MCF 10A (cell line): ENCODE measurements at regions of chr5 and their contacts with region 1.

Region 1: GRCh38 chr5:90461292-90461691 is 13.3 kb downstream of the MBLAC2 start:
- DNase-seq: no peak
- H3K4me3 Mint-ChIP-seq: no peak overlapping the region
- H3K27ac Mint-ChIP-seq: peak overlapping the region; percentile 81
- H3K4me1 Mint-ChIP-seq: no peaks in the 10 kb centered on the region
- H3K27me3 Mint-ChIP-seq: no peaks in the 10 kb centered on the region
- CTCF ChIP-seq: no peak

Region 2: DNA sequence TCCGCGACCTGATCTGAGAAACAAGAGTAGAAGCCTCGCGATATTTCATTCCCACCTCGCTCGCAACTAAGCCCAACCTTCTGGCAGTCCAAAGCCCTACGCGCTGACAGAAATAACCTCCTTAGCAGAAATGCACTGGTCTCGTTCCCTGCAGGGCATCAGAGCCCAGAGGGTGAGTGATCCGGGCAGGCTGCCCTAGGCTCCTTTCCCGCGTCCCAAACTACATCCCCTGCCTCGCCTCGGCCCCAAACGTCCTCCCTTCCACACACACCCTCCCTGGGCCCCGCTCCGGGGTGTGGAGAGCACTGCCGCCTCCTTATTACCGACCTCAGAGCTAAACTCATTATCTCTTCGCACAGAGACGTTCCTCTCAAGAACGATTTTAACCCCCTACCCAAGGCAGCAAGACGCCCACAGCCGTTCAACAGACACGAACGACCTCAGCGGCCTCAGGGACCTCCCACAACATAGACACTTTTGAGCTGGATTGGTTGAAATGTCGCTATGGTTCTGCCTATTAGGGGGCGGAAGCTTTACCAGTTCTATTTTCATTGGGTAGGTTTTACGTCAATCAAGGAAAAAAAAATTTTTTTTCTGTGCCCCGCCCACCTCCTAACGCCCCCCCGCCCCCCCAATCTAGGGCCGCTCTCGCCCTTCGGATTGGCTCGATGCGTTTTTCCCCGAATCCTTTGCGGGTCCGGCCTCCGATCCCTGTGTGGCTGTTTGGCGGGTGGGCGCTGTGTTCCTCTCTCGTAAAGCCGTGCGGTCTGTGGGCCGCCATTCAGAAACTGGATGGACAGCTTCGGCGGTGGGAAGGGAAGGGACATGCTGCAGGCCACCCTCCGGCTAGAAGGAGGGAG is 51.7 kb before region 1 on chr5 and contains the start of gene CETN3:
- CTCF ChIA-PET with region 1: interaction called, 3 read pairs
- POLR2A ChIA-PET with region 1: interaction called, 33 read pairs
- intact Hi-C with region 1: no loop called
- DNase-seq: peak; percentile 95
- H3K4me3 Mint-ChIP-seq: no peak within 1 kb of the TSS
- H3K27ac Mint-ChIP-seq: no peak within 1 kb of the TSS
- H3K4me1 Mint-ChIP-seq: peaks cover 22% of the 10 kb centered on the region
- H3K27me3 Mint-ChIP-seq: no peaks in the 10 kb centered on the region
- CTCF ChIP-seq: no peak
- total RNA-seq, gene CETN3: 24.8 and 28.4 TPM in 2 replicates

Region 3: GRCh38 chr5:90440644-90441043 is 20.6 kb before region 1 on chr5:
- CTCF ChIA-PET with region 1: interaction called, 16 read pairs
- POLR2A ChIA-PET with region 1: interaction called, 8 read pairs
- intact Hi-C with region 1: no loop called
- DNase-seq: no peak
- H3K4me3 Mint-ChIP-seq: peak overlapping the region; percentile 71
- H3K27ac Mint-ChIP-seq: peak overlapping the region; percentile 47
- H3K4me1 Mint-ChIP-seq: no peaks in the 10 kb centered on the region
- H3K27me3 Mint-ChIP-seq: peaks cover 15% of the 10 kb centered on the region
- CTCF ChIP-seq: no peak

Region 4: DNA sequence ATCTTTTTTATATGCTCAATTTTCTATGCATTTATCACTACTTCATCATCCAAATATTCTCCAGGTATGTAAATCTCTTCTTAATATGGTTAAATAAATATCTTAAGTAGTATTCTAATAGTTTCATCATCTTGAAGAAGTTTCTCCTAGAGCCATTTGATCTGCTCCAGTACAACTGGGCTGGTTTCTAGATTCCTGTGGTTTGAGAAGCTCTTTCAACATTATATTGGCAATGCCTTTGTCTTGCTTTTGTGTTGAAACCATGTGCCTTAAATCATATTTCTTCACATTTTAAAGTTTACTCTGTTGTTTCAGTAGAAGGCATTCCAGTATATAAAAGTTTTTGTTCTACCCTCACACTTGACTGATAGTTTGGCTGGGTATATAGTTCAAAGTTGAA is 14.3 kb before region 1 on chr5:
- CTCF ChIA-PET with region 1: interaction called, 16 read pairs
- POLR2A ChIA-PET with region 1: interaction called, 4 read pairs
- intact Hi-C with region 1: no loop called
- DNase-seq: peak; percentile 11
- H3K4me3 Mint-ChIP-seq: no peak overlapping the region
- H3K27ac Mint-ChIP-seq: no peak overlapping the region
- H3K4me1 Mint-ChIP-seq: no peaks in the 10 kb centered on the region
- H3K27me3 Mint-ChIP-seq: no peaks in the 10 kb centered on the region
- CTCF ChIP-seq: no peak

Region 5: DNA sequence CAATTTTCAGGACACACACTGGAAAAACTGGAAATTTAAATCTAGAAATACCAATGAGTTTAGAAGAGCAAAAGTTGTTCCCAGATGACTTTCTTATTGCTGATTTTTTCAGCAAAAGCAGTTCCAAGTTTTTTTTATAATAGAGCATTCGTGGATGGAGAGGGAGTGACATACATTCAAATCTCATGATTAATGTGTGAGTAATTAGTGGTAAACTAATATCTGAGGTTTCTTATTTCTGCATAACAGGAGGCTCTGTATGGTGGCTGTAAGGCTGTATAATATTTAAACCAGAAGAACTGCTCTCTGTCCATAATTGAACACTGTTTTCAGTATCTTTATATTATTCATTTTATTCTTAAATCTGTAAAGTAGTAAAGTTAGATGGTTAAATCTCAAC is 42.3 kb after region 1 on chr5:
- CTCF ChIA-PET with region 1: no interaction called
- POLR2A ChIA-PET with region 1: no interaction called
- intact Hi-C with region 1: no loop called
- DNase-seq: no peak
- H3K4me3 Mint-ChIP-seq: no peak overlapping the region
- H3K27ac Mint-ChIP-seq: no peak overlapping the region
- H3K4me1 Mint-ChIP-seq: no peaks in the 10 kb centered on the region
- H3K27me3 Mint-ChIP-seq: no peaks in the 10 kb centered on the region
- CTCF ChIP-seq: no peak